ENCODE measurements at regions of chr11 and their contacts with region 1.

Region 1: DNA sequence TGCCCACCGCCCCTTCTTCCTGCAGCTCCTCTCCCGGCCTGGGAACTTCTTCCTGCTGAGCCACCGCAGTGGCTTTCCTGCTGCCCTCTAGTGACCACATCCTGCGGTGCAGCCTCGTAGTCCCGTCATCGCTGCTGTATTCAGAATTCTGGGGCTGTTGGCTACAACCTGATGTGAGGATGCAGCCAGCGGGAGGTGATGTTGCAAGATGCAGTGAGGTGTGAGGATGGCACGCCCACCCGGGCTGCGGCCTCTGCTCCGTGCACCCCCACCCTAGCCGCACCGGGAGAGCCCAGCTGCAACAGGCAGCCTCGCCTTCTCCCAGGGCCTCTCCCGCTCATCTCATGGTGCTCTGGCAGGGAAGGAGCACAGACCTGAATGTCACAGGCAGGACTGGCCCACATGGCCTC is 10.1 kb downstream of the CHST1 start:
- DNase-seq: peak in 1 of 2 donors; percentile 84
- H3K4me3 ChIP-seq: no peak overlapping the region
- H3K27ac ChIP-seq: no peak overlapping the region
- H3K4me1 ChIP-seq: peaks cover 4 to 47% of the 10 kb centered on the region in 2 donors
- H3K27me3 ChIP-seq: no peaks in the 10 kb centered on the region
- CTCF ChIP-seq: peak; percentile 69 to 97 (median 94)

Region 2: GRCh38 chr11:45371251-45372115 is 283.9 kb before region 1 on chr11:
- intact Hi-C with region 1: loop called (anchors 2 kb)
- DNase-seq: peak in 1 of 2 donors; percentile 74
- H3K4me3 ChIP-seq: no peak overlapping the region
- H3K27ac ChIP-seq: no peak overlapping the region
- H3K4me1 ChIP-seq: no peaks in the 10 kb centered on the region
- H3K27me3 ChIP-seq: no peaks in the 10 kb centered on the region
- CTCF ChIP-seq: peak; percentile 65 to 89 (median 83)